HepG2 (cell line): ENCODE measurements at regions of chr12 and their contacts with region 1.

Region 1: GRCh38 chr12:98593351-98594049 is at the start of gene SLC25A3:
- DNase-seq: peak; percentile 94
- ATAC-seq: peak; percentile 98
- H3K4me3 ChIP-seq: peak within 1 kb of the TSS; percentile 88 to 98 (median 97)
- H3K27ac ChIP-seq: peak within 1 kb of the TSS; percentile 80
- H3K4me1 ChIP-seq: peaks cover 47% of the 10 kb centered on the region
- H3K27me3 ChIP-seq: no peaks in the 10 kb centered on the region; a peak in 1 of 5 replicates
- CTCF ChIP-seq: no peak
- EP300 ChIP-seq: peak; percentile 12 to 48; a peak in 1 of 4 replicates
- POLR2A ChIP-seq: peak; percentile 99 to 100
- RAD21 ChIP-seq: 0 out of 2 replicates have a peak, but pooled peaks have one; percentile 13
- total RNA-seq, gene SLC25A3: 829 and 1,060 TPM in 2 replicates

Region 2: GRCh38 chr12:98503592-98504367 is 89.7 kb before region 1 on chr12:
- CTCF ChIA-PET with region 1: no interaction called
- POLR2A ChIA-PET with region 1: interaction called, 4 read pairs
- in situ Hi-C with region 1: no loop called
- intact Hi-C with region 1: loop called (anchors 5 kb)
- DNase-seq: peak; percentile 84
- ATAC-seq: peak; percentile 58
- H3K4me3 ChIP-seq: peak overlapping the region; percentile 72 to 77 (median 77)
- H3K27ac ChIP-seq: peak overlapping the region; percentile 99
- H3K4me1 ChIP-seq: peaks cover 39% of the 10 kb centered on the region
- H3K27me3 ChIP-seq: no peaks in the 10 kb centered on the region; a peak in 1 of 5 replicates
- CTCF ChIP-seq: peak; percentile 38
- EP300 ChIP-seq: peak in 1 of 2 experiments; percentile 25; a peak in 3 of 4 replicates
- POLR2A ChIP-seq: peak; percentile 65 to 74
- RAD21 ChIP-seq: peak; percentile 4; the same call in 1 of the 2 replicates

Region 3: DNA sequence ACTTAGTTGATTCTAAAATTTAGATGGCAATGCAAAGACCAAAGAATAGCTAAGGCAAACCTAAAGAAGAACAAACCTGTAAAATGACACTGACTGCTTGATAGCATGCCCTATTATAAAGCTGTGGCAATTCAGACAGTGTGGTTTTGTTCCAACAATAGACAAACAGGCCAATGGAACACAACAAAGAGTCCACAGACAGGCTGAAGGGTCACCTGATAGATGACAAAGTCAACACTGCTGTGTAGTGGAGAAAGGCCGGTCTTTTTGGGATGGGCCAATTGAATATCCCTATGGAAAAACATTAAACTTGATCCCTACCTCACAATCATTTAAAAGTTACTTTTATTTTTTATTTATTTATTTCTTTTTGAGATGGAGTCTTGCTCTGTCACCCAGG is 33.8 kb before region 1 on chr12:
- CTCF ChIA-PET with region 1: no interaction called
- POLR2A ChIA-PET with region 1: no interaction called
- in situ Hi-C with region 1: no loop called
- intact Hi-C with region 1: no loop called
- DNase-seq: peak; percentile 60
- ATAC-seq: peak; percentile 84
- H3K4me3 ChIP-seq: no peak overlapping the region
- H3K27ac ChIP-seq: no peak overlapping the region
- H3K4me1 ChIP-seq: peaks cover 8% of the 10 kb centered on the region
- H3K27me3 ChIP-seq: no peaks in the 10 kb centered on the region
- CTCF ChIP-seq: no peak
- EP300 ChIP-seq: no peak
- POLR2A ChIP-seq: no peak
- RAD21 ChIP-seq: no peak

Region 4: DNA sequence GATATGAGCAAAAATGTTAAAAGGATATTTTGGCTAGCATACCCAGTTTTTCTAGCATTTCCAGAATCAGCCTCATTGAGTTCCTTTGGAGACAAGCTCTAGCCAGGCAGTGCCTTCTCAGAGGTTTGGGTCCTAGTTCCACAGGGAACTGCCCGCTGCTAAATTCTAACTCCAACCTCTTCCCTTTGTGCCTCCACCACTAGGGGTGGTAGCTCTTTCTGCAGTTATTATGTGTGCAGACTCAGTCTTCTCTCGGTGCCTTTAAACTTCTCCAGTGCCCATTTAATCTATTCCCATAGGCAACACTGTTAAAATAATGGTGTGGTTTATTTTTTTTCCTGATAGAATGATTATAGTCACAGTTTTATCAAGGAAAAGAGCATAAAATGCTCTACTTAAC is 21.5 kb before region 1 on chr12:
- CTCF ChIA-PET with region 1: interaction called, 3 read pairs
- POLR2A ChIA-PET with region 1: interaction called, 15 read pairs
- in situ Hi-C with region 1: no loop called
- intact Hi-C with region 1: loop called (anchors 2 kb)
- DNase-seq: peak; percentile 35
- ATAC-seq: peak; percentile 81
- H3K4me3 ChIP-seq: no peak overlapping the region
- H3K27ac ChIP-seq: no peak overlapping the region
- H3K4me1 ChIP-seq: peaks cover 25% of the 10 kb centered on the region
- H3K27me3 ChIP-seq: no peaks in the 10 kb centered on the region
- CTCF ChIP-seq: peak; percentile 42
- EP300 ChIP-seq: no peak
- POLR2A ChIP-seq: no peak
- RAD21 ChIP-seq: no peak

Region 5: DNA sequence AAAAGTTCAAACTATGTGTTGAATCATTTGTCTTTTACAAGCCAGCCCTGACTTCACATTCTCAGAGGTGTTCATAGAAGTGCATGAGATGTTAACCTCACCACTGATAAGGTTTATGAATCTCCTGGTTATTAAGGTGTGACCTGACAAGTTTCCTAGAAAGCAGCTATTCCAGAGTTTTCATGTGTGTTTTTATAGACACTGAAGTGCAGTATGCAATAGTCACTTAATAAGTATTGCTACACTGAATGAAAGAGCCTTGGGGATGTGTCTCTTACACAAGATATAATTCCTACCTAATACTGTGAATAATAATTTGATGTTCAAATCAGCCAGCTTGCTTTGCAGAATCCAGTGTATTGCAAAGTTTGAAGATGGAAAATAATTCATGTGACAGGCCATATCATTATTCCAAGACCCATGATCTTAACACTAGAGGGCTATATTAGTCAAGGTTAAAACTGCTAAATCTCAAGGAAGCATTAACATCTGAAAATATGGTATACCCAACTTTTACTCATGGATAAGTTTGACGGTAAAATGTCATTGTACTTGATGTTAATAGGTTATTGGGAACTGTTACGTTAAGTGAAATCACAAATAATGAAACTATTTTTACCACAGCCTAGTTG is 13.0 kb after region 1 on chr12:
- CTCF ChIA-PET with region 1: no interaction called
- POLR2A ChIA-PET with region 1: interaction called, 32 read pairs
- in situ Hi-C with region 1: no loop called
- intact Hi-C with region 1: no loop called
- DNase-seq: no peak
- ATAC-seq: no peak
- H3K4me3 ChIP-seq: no peak overlapping the region
- H3K27ac ChIP-seq: no peak overlapping the region
- H3K4me1 ChIP-seq: no peaks in the 10 kb centered on the region
- H3K27me3 ChIP-seq: no peaks in the 10 kb centered on the region
- CTCF ChIP-seq: no peak
- EP300 ChIP-seq: no peak
- POLR2A ChIP-seq: no peak
- RAD21 ChIP-seq: no peak

Region 6: DNA sequence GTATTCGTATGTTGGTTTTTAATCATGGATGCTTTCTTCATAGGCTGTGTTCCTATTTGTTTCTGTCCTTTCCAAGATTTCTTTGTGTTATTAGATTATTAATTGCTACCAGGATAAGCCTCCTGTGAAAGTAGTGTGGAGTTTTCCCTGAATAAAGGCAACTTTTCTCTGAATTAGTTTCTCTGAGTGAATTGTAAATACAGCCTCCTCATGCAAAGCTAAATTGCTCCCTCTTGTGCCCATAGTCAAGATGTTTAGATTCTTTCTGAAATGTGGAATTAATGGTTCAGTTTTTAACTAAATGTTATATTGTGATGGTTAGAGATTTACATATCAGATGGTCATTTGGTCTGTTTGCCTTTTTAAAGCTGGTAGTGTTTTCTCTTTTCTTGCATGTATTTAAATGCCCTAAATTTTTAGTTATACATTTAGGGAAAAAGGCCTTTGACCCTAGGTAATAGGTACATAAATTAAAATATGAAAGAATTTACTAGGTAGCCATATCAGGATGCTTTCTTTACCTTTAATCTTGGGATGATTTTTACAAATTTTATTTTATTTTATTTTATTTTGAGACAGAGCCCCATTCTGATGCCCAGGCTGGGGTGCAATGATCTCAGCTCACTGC is 60.5 kb after region 1 on chr12:
- CTCF ChIA-PET with region 1: no interaction called
- POLR2A ChIA-PET with region 1: no interaction called
- in situ Hi-C with region 1: no loop called
- intact Hi-C with region 1: loop called (anchors 2 kb)
- DNase-seq: peak; percentile 68
- ATAC-seq: peak; percentile 49; the same call in 2 of the 3 replicates
- H3K4me3 ChIP-seq: no peak overlapping the region
- H3K27ac ChIP-seq: no peak overlapping the region
- H3K4me1 ChIP-seq: no peaks in the 10 kb centered on the region
- H3K27me3 ChIP-seq: no peaks in the 10 kb centered on the region
- CTCF ChIP-seq: peak; percentile 65
- EP300 ChIP-seq: no peak
- POLR2A ChIP-seq: no peak
- RAD21 ChIP-seq: peak; percentile 68

Region 7: DNA sequence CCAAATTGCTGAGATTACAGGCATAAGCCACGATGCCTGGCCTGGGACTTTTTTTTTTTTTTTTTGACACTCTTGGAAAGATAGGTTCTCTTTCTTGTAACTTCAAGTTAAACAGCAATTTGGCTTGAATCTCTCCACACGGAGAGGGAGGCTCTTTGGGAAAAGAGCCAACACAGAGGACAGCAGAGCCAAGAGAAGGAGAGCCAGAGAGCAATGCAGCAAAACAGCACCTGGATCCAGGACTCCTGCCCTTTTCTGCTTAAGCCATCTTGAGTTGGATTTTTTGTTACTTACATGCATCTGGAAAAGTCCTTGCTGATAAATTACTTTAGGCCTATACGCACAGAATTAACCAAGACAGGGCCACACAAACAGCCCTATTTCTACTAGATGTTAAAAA is 228.4 kb after region 1 on chr12:
- CTCF ChIA-PET with region 1: no interaction called
- POLR2A ChIA-PET with region 1: no interaction called
- in situ Hi-C with region 1: no loop called
- intact Hi-C with region 1: no loop called
- DNase-seq: no peak
- ATAC-seq: no peak
- H3K4me3 ChIP-seq: no peak overlapping the region
- H3K27ac ChIP-seq: no peak overlapping the region
- H3K4me1 ChIP-seq: 0 out of 2 replicates have a peak, but pooled peaks cover 8% of the 10 kb centered on the region
- H3K27me3 ChIP-seq: peaks cover 0 to 2% of the 10 kb centered on the region in 2 experiments; a peak in 1 of 5 replicates
- CTCF ChIP-seq: no peak
- EP300 ChIP-seq: no peak
- POLR2A ChIP-seq: no peak
- RAD21 ChIP-seq: no peak